T-cell (primary cell): ENCODE measurements at regions of chr19 and their contacts with region 1.

Region 1: DNA sequence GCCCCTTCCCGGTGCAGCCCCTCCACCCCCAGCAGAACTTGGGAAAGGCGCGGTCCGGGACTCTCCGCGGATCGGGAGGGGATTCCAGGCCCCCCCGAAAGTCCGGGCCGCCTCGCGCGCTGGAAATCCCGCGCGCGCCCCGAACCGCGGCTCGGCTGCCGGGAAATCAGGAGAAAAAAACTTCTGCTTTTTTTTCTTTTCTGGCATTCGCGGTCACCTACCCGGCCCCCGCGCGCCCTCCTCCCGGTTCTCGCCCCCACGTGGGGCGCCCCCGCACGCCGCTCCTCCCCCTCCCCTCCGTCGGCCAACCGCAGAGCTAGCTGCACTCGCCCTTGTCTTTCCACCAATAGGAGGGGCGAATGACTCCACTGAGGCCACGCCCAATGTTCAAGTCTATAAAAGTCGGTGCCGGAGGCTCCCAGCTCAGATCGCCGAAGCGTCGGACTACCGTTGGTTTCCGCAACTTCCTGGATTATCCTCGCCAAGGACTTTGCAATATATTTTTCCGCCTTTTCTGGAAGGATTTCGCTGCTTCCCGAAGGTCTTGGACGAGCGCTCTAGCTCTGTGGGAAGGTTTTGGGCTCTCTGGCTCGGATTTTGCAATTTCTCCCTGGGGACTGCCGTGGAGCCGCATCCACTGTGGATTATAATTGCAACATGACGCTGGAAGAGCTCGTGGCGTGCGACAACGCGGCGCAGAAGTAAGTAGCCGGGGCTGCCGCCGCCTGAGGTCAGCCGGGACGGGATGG is at the start of gene GADD45B:
- DNase-seq: peak; percentile 91 to 99 (median 96)
- ATAC-seq: peak; percentile 56 to 70 (median 70)
- H3K4me3 ChIP-seq: peak within 1 kb of the TSS; percentile 87 to 100
- H3K4me3 Mint-ChIP-seq: peak within 1 kb of the TSS; percentile 95 to 100 (median 99)
- H3K27ac ChIP-seq: peak within 1 kb of the TSS; percentile 76
- H3K27ac Mint-ChIP-seq: peak within 1 kb of the TSS; percentile 85 to 99
- H3K4me1 ChIP-seq: peaks cover 13 to 47% of the 10 kb centered on the region in 2 experiments
- H3K4me1 Mint-ChIP-seq: peaks cover 11 to 33% (median 23%) of the 10 kb centered on the region in 3 donors
- H3K27me3 ChIP-seq: no peaks in the 10 kb centered on the region
- H3K27me3 Mint-ChIP-seq: no peaks in the 10 kb centered on the region
- total RNA-seq, gene GADD45B: 76.5 to 174 (median 102) TPM

Region 2: DNA sequence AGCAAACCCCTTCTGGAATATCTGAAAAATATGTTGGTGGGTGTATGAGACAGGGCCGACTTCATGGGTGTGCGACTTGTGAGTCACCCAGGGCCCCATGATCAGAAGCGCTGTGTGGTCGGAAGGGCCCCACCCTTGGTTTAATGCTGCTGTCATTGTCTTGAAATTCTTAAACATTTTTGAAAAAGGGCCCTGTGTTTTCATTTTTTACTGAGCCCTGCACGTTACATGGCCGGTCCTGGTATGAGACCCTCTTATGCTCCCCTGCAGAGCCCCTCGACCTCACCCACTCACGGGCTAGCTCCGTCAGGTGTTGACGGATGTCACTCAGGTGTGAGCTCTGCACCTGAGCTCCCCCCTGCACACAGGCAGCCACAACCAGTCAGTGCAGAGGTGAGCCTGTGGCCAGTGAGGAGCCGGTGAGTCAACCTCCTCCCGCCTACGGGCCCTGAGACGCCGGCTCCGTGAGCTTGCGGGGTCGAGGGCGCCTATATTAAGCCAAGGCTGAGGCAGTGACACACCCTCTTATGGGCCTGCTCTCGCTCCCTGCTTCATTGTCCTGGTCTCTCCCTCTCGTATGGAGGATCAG is 27.7 kb after region 1 on chr19:
- CTCF ChIA-PET with region 1: interaction called in 1 of 2 experiments, 6 read pairs
- POLR2A ChIA-PET with region 1: interaction called in 1 of 2 experiments, 21 read pairs
- DNase-seq: peak; percentile 44 to 80 (median 60)
- ATAC-seq: peak; percentile 79 to 92 (median 92)
- H3K4me3 ChIP-seq: peak overlapping the region in 1 of 2 donors; percentile 19
- H3K4me3 Mint-ChIP-seq: peak overlapping the region; percentile 52 to 72 (median 66)
- H3K27ac ChIP-seq: peak overlapping the region; percentile 88
- H3K27ac Mint-ChIP-seq: peak overlapping the region; percentile 96 to 97
- H3K4me1 ChIP-seq: peaks cover 3 to 42% of the 10 kb centered on the region in 2 experiments
- H3K4me1 Mint-ChIP-seq: peaks cover 23 to 43% (median 31%) of the 10 kb centered on the region in 3 donors
- H3K27me3 ChIP-seq: no peaks in the 10 kb centered on the region
- H3K27me3 Mint-ChIP-seq: peaks cover 0 to 3% of the 10 kb centered on the region in 2 donors

Region 3: GRCh38 chr19:2600914-2601870 is 125.3 kb after region 1 on chr19:
- CTCF ChIA-PET with region 1: interaction called in 1 of 2 experiments, 8 read pairs
- POLR2A ChIA-PET with region 1: interaction called, 11 to 35 read pairs
- DNase-seq: no peak
- ATAC-seq: no peak
- H3K4me3 ChIP-seq: no peak overlapping the region
- H3K4me3 Mint-ChIP-seq: no peak overlapping the region
- H3K27ac ChIP-seq: no peak overlapping the region
- H3K27ac Mint-ChIP-seq: no peak overlapping the region
- H3K4me1 ChIP-seq: peaks cover 0 to 12% of the 10 kb centered on the region in 2 experiments
- H3K4me1 Mint-ChIP-seq: peaks cover 6 to 15% (median 12%) of the 10 kb centered on the region in 3 donors
- H3K27me3 ChIP-seq: no peaks in the 10 kb centered on the region
- H3K27me3 Mint-ChIP-seq: no peaks in the 10 kb centered on the region

Region 4: DNA sequence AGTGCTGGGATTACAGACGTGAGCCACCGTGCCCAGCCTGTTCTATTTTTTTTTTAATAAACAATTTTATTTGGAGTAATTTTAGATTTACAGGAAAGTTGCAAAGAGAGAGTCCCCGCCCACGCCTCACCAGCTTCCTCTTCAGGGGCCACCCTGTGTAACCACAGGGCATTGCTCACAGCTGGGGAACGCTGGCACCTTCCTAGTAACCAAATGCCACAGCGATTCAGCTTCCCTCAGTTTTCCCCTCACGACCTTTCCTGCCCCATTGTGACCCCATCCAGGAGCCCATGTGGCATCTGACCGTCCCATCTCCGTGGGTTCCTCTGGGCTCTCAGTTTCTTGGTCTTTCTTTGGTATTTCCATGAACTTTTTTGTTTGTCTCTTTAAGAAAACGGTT is 142.7 kb after region 1 on chr19:
- CTCF ChIA-PET with region 1: interaction called, 5 to 21 read pairs
- POLR2A ChIA-PET with region 1: interaction called, 14 to 52 read pairs
- DNase-seq: peak in 33 of 35 experiments; percentile 44 to 78 (median 62)
- ATAC-seq: peak; percentile 34 to 50 (median 40)
- H3K4me3 ChIP-seq: peak overlapping the region; percentile 25 to 62
- H3K4me3 Mint-ChIP-seq: peak overlapping the region; percentile 52 to 81 (median 58)
- H3K27ac ChIP-seq: peak overlapping the region; percentile 53
- H3K27ac Mint-ChIP-seq: peak overlapping the region; percentile 86 to 89
- H3K4me1 ChIP-seq: peaks cover 42 to 80% of the 10 kb centered on the region in 2 experiments
- H3K4me1 Mint-ChIP-seq: peaks cover 63 to 71% (median 63%) of the 10 kb centered on the region in 3 donors
- H3K27me3 ChIP-seq: no peaks in the 10 kb centered on the region
- H3K27me3 Mint-ChIP-seq: no peaks in the 10 kb centered on the region

Region 5: GRCh38 chr19:2636897-2637683 is 161.2 kb after region 1 on chr19:
- CTCF ChIA-PET with region 1: interaction called, 3 to 13 read pairs
- POLR2A ChIA-PET with region 1: no interaction called
- DNase-seq: peak; percentile 53 to 86 (median 73)
- ATAC-seq: peak; percentile 82 to 94 (median 89)
- H3K4me3 ChIP-seq: no peak overlapping the region
- H3K4me3 Mint-ChIP-seq: peak overlapping the region in 1 of 3 donors; percentile 36
- H3K27ac ChIP-seq: no peak overlapping the region
- H3K27ac Mint-ChIP-seq: no peak overlapping the region
- H3K4me1 ChIP-seq: peaks cover 0 to 15% of the 10 kb centered on the region in 2 experiments
- H3K4me1 Mint-ChIP-seq: peaks cover 15 to 18% (median 16%) of the 10 kb centered on the region in 3 donors
- H3K27me3 ChIP-seq: peaks cover 0 to 23% of the 10 kb centered on the region in 2 experiments
- H3K27me3 Mint-ChIP-seq: no peaks in the 10 kb centered on the region